Left lung (tissue), 14 donors: ENCODE measurements at regions of chr4 and their contacts with region 1.

Region 1: GRCh38 chr4:114072781-114073180 is 93.3 kb upstream of the ARSJ start:
- DNase-seq: no peak
- ATAC-seq: no peak
- H3K4me3 ChIP-seq: no peak overlapping the region
- H3K27ac ChIP-seq: no peak overlapping the region
- H3K4me1 ChIP-seq: no peaks in the 10 kb centered on the region
- H3K27me3 ChIP-seq: no peaks in the 10 kb centered on the region
- CTCF ChIP-seq: no peak

Region 2: DNA sequence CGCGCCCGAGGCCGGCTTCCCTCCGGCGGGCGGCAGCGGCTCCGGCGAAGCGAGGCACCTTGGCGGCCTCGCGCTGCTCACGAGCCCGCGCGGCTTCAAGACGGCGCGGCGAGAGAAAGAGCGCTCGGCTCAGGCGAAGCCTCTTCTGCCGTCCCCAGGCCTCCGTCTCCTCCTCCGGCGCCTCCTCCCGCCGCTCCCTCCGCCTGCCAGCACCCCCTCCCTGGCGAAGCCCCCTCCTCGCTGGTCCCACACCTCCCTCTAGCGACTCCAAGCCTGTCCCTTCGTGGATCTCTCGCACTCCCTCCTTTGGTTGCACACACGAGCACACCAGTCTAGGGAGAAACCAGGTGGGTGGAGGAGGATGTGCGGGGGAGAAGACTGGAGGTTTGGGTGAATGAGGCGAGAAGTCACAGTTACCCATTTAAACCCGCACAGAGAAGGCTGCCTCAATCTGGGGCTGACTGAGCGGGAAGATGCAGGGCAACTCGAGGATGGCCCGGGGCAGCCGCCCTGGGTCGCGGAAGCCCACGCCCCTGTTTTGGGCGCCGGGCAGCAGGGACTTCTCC is 311.1 kb before region 1 on chr4 and contains the start of gene CAMK2D:
- intact Hi-C with region 1: no loop called
- DNase-seq: peak; percentile 88 to 94 (median 93)
- ATAC-seq: peak; percentile 80
- H3K4me3 ChIP-seq: peak within 1 kb of the TSS; percentile 64 to 79
- H3K27ac ChIP-seq: peak within 1 kb of the TSS; percentile 98 to 100
- H3K4me1 ChIP-seq: peaks cover 2 to 35% of the 10 kb centered on the region in 2 donors
- H3K27me3 ChIP-seq: peaks cover 0 to 18% of the 10 kb centered on the region in 2 donors
- CTCF ChIP-seq: peak in 1 of 2 donors; percentile 32
- polyA plus RNA-seq, gene CAMK2D: 65.6 to 93.2 (median 72.4) TPM

Region 3: GRCh38 chr4:113878668-113879067 is 194.1 kb before region 1 on chr4:
- intact Hi-C with region 1: no loop called
- DNase-seq: no peak
- ATAC-seq: no peak
- H3K4me3 ChIP-seq: no peak overlapping the region
- H3K27ac ChIP-seq: no peak overlapping the region
- H3K4me1 ChIP-seq: no peaks in the 10 kb centered on the region
- H3K27me3 ChIP-seq: no peaks in the 10 kb centered on the region
- CTCF ChIP-seq: no peak

Region 4: DNA sequence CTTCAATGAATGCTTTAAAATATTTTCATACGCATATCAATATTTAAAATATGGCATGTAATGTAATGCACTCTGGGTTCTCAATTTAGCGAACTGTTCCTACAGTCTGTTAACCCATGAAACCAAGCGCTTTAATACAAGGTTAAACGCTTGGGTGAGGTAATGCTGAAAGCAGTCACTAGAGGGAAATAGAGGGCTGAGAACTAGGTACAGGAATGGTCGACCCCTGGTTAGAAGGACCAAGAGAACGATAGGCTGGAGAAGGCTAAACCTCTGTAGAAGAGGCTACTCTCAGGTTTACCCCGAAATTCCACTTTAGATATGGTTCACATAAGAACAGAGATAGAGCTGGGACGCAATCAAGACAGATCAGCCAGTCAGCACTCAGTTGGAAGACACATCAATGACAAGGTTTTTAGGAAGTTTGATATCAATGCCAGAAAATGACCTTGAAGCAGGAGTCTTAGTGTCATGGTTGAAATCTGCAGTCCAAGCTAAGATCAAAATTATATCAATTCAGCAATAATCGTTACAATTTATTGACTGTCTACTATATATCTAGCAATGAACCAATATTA is 120.2 kb before region 1 on chr4:
- intact Hi-C with region 1: loop called in 1 of 2 experiments (anchors 5 kb)
- DNase-seq: peak in 1 of 4 donors; percentile 22
- ATAC-seq: peak; percentile 87
- H3K4me3 ChIP-seq: no peak overlapping the region
- H3K27ac ChIP-seq: no peak overlapping the region
- H3K4me1 ChIP-seq: peaks cover 0 to 10% of the 10 kb centered on the region in 2 donors
- H3K27me3 ChIP-seq: no peaks in the 10 kb centered on the region
- CTCF ChIP-seq: peak; percentile 62 to 69